Posterior vena cava (tissue), 2 donors: ENCODE measurements at regions of chr4 and their contacts with region 1.

Region 1: DNA sequence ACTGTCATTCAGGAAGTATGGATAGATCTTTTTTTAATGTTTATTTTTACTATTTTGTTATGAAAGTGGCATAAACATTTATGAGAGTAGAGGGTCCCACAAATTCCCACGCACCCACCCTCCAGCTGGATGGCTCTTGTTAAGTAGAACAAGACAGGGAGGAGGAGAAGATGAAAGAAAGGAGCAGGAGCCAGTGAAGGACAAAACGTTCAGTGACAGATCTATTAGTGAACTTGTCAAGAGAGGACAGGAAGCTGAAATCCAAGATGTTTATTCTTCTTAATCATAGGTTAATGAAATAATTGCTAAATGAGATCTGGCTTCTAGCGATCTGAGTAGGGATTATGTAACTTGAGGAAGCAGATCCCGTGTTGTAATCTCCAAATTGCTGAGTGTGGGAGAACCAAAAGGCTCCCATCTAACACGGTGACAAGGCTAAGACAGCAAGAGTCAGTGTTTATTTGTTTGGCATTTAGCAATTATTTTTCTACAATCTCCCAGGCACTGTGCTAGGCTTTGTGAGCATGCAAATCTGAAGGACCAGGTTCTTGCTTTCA is 162.5 kb downstream of the SHROOM3 start:
- DNase-seq: no peak

Region 2: DNA sequence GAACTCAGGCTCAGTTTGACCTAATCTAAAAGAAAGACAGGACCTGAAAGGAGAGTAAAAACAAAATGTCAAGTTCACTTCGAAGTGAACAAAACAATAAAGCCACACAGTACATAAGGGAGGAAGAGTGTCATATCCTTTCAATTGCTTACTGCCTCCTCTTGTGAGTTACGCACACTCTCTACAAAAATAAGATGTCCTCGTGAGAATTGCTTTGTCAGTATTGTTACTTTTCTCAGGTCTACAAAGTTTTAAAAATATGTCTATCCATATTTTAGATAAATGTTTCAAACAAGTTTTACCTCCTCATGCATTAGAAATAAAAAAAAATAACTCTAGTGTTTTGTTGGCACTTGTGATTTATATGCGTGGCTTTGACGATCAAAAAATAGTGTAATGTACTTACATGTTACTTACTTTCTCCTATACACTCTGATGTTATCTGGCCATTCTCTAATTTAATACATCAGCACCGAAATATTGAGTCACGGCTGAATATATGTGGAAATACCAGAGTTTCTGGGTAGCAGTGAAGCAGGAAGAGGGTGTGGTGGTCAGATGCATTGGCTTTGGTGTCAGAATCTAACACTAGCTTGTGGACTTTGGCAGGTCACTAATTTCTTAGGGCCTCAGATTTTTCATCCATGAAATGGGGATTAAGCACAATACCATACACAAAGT is 1257.1 kb after region 1 on chr4:
- intact Hi-C with region 1: loop called in 1 of 2 experiments (anchors 5 kb)
- DNase-seq: no peak